ENCODE measurements at regions of chr5 and their contacts with region 1.

Region 1: DNA sequence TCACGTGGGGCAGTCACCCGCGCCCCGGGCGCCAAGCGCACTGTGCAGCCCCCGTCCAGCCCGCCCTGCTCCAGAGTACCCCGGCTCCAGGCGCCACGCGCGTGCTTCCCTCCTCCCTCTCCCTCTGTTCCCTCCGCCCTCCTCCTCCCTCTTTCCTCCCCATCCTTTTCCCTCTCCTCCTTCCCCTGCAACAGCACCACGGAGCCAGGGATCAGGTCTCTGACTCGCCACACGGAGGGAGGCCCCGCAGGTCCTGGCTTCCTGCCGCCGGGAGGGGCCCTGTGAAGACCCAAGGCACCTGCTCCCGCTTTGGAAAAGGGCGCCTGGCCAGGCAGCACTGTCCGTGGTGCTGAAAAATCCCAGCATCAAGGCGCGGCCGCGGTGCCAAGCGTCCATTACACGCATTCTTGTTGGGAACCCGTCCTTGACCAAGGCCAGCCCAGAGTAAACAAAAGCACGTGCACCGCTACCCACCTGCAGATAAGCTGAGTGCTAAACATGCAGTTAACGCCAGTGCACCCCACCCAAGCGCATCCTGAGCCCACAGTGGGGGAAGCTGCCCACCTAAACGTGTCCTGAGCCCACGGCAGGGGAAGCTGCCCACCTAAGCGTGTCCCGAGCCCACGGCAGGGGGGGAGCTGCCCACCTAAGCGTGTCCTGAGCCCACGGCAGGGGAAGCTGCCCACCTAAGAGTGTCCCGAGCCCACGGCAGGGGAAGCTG is 21.7 kb downstream of the SLC6A18 start:
- DNase-seq: no peak
- ATAC-seq: peak; percentile 51; the same call in 1 of the 2 replicates
- H3K4me3 ChIP-seq: no peak overlapping the region
- H3K27ac ChIP-seq: no peak overlapping the region
- H3K4me1 ChIP-seq: no peaks in the 10 kb centered on the region
- H3K27me3 ChIP-seq: peaks cover 3% of the 10 kb centered on the region; the same call in 1 of the 2 replicates
- CTCF ChIP-seq: no peak
- POLR2A ChIP-seq: no peak
- RAD21 ChIP-seq: no peak

Region 2: GRCh38 chr5:776792-777711 is 469.8 kb before region 1 on chr5:
- CTCF ChIA-PET with region 1: no interaction called
- POLR2A ChIA-PET with region 1: no interaction called
- dilution Hi-C with region 1: no loop called
- in situ Hi-C with region 1: no loop called
- intact Hi-C with region 1: no loop called
- DNase-seq: no peak
- ATAC-seq: 0 out of 2 replicates have a peak, but pooled peaks have one; percentile 40
- H3K4me3 ChIP-seq: no peak overlapping the region
- H3K27ac ChIP-seq: no peak overlapping the region
- H3K4me1 ChIP-seq: no peaks in the 10 kb centered on the region
- H3K27me3 ChIP-seq: peaks cover 19% of the 10 kb centered on the region; the same call in 1 of the 2 replicates
- CTCF ChIP-seq: no peak
- POLR2A ChIP-seq: no peak
- RAD21 ChIP-seq: no peak

Region 3: DNA sequence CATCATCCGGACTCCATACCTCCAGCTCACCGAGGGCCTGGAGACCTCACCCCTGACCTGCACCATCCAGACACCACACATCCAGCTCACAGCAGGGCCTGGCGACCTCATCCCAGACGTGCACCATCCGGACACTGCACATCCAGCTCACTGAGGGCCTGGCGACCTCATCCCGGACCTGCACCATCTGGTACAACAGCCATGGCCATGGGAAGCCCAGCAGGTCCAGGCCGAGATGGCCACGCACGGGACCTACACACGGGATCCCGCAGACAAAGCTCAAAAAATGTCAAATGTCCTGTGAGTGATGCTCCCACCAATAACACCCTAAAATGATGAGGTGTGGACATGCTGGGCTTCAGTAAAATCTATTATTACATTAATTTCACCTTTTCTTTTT is 38.3 kb after region 1 on chr5:
- CTCF ChIA-PET with region 1: no interaction called
- POLR2A ChIA-PET with region 1: interaction called, 17 read pairs
- dilution Hi-C with region 1: no loop called
- in situ Hi-C with region 1: no loop called
- intact Hi-C with region 1: no loop called
- DNase-seq: no peak
- ATAC-seq: no peak
- H3K4me3 ChIP-seq: no peak overlapping the region
- H3K27ac ChIP-seq: no peak overlapping the region
- H3K4me1 ChIP-seq: no peaks in the 10 kb centered on the region
- H3K27me3 ChIP-seq: no peaks in the 10 kb centered on the region
- CTCF ChIP-seq: no peak
- POLR2A ChIP-seq: no peak
- RAD21 ChIP-seq: no peak

Region 4: GRCh38 chr5:1341863-1342262 is 95.0 kb after region 1 on chr5:
- CTCF ChIA-PET with region 1: no interaction called
- POLR2A ChIA-PET with region 1: no interaction called
- dilution Hi-C with region 1: no loop called
- in situ Hi-C with region 1: no loop called
- intact Hi-C with region 1: no loop called
- DNase-seq: no peak
- ATAC-seq: no peak
- H3K4me3 ChIP-seq: no peak overlapping the region
- H3K27ac ChIP-seq: no peak overlapping the region
- H3K4me1 ChIP-seq: peaks cover 8% of the 10 kb centered on the region; the same call in 1 of the 2 replicates
- H3K27me3 ChIP-seq: no peaks in the 10 kb centered on the region
- CTCF ChIP-seq: no peak
- POLR2A ChIP-seq: no peak
- RAD21 ChIP-seq: no peak

Region 5: GRCh38 chr5:1840741-1841521 is 594.1 kb after region 1 on chr5:
- CTCF ChIA-PET with region 1: no interaction called
- POLR2A ChIA-PET with region 1: no interaction called
- dilution Hi-C with region 1: no loop called
- in situ Hi-C with region 1: no loop called
- intact Hi-C with region 1: no loop called
- DNase-seq: no peak
- ATAC-seq: peak; percentile 66
- H3K4me3 ChIP-seq: no peak overlapping the region
- H3K27ac ChIP-seq: no peak overlapping the region
- H3K4me1 ChIP-seq: no peaks in the 10 kb centered on the region
- H3K27me3 ChIP-seq: peaks cover 37% of the 10 kb centered on the region
- CTCF ChIP-seq: no peak
- POLR2A ChIP-seq: no peak
- RAD21 ChIP-seq: no peak